Gastrocnemius medialis (tissue), 4 donors: ENCODE measurements at regions of chr5 and their contacts with region 1.

Region 1: DNA sequence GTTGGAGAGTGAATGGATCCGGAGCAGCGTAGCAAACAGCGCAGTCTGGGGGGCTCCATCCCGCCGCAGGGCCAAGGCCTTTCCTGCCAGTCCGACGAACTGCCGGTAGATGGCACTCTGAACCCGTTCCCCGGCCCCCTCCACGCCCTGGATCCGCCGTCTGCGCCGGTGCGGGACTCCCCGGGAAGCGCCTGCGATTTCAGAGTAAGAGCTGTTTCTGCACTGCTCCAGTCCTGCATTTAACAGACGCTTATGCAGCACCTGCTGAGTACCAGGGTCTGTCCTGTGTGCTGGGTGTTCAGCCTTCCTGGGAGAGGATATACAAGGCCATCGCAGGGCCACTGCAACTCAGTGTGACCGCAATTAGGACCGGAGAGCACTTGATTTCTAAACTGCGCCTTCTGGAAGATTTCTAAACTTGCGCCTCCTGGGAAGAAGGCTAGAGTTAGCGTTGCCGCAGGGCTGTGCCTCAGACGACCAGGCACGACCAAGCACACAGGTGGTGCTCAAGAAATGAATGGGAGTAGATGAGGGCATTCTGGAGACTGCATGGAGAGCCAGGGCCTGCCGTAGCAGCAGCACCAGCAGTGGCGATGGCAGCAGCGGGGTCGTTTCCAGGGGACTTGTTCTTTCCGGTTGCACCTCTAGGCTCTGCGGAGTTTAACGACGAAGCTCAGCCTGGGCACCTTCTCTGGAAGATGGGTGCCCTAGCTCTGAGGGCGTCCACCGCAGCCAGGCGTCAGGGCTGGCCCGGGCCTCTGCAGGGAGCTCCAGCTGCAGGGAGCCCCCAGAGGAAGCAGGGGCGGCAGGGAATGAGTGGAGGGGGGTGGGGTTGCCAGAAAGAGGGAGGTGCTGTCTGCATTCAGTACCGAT is 14.3 kb upstream of the TIFAB start:
- DNase-seq: peak; percentile 52 to 59
- ATAC-seq: peak; percentile 87
- H3K4me3 ChIP-seq: peak overlapping the region; percentile 29 to 46 (median 32)
- H3K27ac ChIP-seq: no peak overlapping the region
- H3K4me1 ChIP-seq: peaks cover 0 to 4% of the 10 kb centered on the region in 2 donors
- H3K27me3 ChIP-seq: peaks cover 0 to 18% (median 0%) of the 10 kb centered on the region in 3 donors
- CTCF ChIP-seq: peak; percentile 61 to 94 (median 82)
- POLR2A ChIP-seq: no peak

Region 2: DNA sequence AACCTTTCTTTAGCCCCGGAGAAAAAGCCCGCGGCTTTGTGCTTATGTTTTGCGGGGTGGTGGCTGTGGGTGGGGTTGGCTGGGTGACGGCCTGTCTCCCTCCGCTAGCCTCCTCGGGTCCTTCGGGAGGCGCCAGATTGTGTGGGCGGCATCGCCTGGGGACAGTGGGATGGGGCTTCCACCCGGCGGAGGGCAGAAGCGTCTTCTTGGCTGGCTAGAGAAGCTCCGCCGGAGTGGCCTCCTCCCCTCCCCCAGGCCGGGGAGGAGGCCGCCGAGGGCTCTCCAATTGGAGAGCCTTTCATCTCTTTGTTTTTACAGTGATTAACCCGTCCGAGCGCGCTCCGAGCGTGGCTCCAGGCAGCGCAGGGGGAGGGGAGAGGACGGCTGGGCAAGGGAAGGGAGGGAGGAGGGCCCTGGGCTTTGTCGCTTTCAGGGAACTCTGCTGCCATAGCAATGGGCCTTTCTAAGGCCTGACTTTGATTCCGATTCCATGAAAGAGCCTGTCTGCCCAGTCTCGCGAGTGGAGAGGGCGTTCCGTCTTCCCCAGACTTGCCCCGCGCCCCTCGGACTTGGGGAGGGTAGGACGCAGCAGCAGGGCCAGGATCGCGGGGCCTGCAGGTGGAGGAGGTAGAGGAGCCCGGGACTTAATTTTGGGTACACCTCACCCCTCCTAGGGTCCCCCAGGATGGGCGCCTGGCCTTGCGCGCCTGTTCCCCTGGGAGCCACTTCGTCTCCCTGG is 22.5 kb after region 1 on chr5:
- in situ Hi-C with region 1: no loop called
- intact Hi-C with region 1: no loop called
- DNase-seq: no peak
- ATAC-seq: no peak
- H3K4me3 ChIP-seq: peak overlapping the region; percentile 39 to 58 (median 47)
- H3K27ac ChIP-seq: no peak overlapping the region
- H3K4me1 ChIP-seq: peaks cover 16 to 20% of the 10 kb centered on the region in 2 donors
- H3K27me3 ChIP-seq: peaks cover 54 to 59% (median 56%) of the 10 kb centered on the region in 3 donors
- CTCF ChIP-seq: no peak
- POLR2A ChIP-seq: no peak

Region 3: DNA sequence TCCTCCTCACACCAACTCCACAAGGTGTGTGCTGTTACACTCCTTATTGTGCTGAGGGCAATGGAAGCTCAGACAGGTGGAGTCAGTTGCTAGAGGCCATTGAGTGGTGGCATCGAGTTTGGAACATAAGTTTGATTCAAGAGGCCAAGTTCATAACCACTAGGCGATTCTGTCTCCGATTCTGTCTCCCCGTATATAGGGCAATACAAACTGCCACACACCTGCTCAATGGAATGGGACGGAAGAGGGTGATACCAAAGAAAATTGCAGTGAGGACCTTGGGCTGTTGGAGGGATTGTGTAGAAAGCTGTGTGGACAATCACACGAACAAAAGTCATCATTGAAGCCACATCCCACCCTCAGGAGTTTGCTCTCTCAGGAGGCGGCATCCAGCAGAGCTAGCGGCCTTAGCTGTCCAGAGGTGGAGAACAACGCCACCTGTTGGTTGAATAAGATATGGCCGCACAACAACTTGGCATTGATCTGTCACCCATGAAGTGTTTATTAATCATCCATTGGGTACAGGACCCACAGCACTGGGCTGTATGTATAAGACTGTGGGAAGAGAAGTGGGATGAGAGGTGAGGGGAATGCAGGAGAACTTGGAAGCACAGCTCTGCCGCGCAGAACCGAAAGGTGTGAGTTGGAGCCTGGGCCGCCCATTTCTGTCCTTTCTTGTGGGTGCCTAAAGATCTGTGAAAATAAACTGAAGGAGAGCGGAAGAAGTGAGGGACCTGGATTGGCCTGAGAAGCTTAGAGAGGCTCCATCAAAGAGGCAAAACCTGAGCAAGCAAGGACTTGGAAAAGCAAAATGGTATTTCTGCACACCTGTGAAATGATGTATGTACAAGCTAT is 85.4 kb after region 1 on chr5:
- in situ Hi-C with region 1: loop called (anchors 5 kb)
- intact Hi-C with region 1: loop called (anchors 1 kb)
- DNase-seq: peak; percentile 26 to 42
- ATAC-seq: peak; percentile 68 to 83
- H3K4me3 ChIP-seq: no peak overlapping the region
- H3K27ac ChIP-seq: no peak overlapping the region
- H3K4me1 ChIP-seq: no peaks in the 10 kb centered on the region
- H3K27me3 ChIP-seq: peaks cover 4 to 23% (median 6%) of the 10 kb centered on the region in 3 donors
- CTCF ChIP-seq: peak; percentile 49 to 86 (median 83)
- POLR2A ChIP-seq: no peak

Region 4: DNA sequence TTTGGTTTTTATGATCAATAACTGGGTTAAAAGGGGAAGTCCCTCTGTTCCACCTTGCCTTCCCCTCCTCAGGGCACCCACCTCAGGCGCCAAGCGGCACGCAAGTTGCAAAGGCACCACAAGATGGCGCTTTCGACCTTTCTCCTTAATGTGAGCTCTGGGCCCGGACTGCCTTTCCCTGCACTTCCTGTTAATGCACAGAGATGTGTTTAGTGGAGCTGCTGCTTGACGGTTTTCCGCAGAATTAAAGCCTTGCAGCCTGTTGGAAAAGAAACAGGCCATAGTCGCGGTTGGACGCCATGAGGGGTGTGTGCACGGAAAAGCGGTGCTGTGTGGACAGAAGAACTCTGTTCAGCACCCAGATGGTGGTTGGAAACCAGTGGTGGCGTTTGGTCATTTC is 94.4 kb after region 1 on chr5:
- in situ Hi-C with region 1: loop called in 1 of 4 experiments (anchors 5 kb)
- intact Hi-C with region 1: loop called (anchors 5 kb)
- DNase-seq: peak; percentile 38 to 46
- ATAC-seq: peak; percentile 66 to 80
- H3K4me3 ChIP-seq: no peak overlapping the region
- H3K27ac ChIP-seq: no peak overlapping the region
- H3K4me1 ChIP-seq: no peaks in the 10 kb centered on the region
- H3K27me3 ChIP-seq: peaks cover 0 to 15% (median 0%) of the 10 kb centered on the region in 3 donors
- CTCF ChIP-seq: peak; percentile 10 to 75 (median 60)
- POLR2A ChIP-seq: no peak

Region 5: GRCh38 chr5:135565725-135566421 is 99.5 kb after region 1 on chr5:
- in situ Hi-C with region 1: no loop called
- intact Hi-C with region 1: loop called (anchors 5 kb)
- DNase-seq: peak; percentile 27 to 53
- ATAC-seq: peak; percentile 69 to 87
- H3K4me3 ChIP-seq: no peak overlapping the region
- H3K27ac ChIP-seq: no peak overlapping the region
- H3K4me1 ChIP-seq: no peaks in the 10 kb centered on the region
- H3K27me3 ChIP-seq: no peaks in the 10 kb centered on the region
- CTCF ChIP-seq: peak; percentile 42 to 90 (median 70)
- POLR2A ChIP-seq: no peak

Region 6: DNA sequence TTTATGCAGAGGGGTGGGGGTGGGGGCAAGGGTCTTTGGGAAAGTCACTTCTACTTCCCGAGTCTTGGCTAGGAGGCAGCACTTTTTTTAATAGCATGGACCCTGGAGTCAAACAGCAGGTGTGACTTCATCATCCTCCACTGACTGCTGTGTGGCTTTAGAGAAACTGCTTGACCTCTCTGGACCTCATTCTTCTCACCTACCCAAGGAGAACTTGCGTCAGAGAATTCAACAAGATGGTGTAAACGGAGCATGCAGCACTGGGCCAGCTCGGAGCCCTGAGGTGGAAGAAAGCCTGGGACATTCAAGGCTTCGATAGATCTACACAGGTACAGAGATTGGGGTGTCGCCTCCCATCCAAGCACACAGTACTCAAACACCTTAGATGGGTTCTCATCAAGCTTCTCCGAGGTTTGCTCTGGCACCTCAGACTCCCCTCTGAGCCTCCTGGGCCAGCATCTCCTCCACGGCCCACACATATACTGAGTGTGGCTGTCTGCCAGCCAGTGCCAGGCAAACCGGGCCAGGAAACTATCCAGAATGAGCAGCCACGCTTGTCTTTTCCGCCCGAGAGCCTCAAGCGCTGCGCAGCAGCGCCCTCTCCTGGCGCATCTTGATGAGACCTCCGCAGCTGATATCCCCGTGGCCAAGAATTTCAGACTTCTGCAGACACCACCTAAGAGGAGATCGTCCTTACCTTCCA is 363.4 kb after region 1 on chr5:
- in situ Hi-C with region 1: loop called in 3 of 4 experiments (anchors 25 kb)
- intact Hi-C with region 1: loop called (anchors 10 kb)
- DNase-seq: peak in 1 of 2 donors; percentile 39
- ATAC-seq: peak; percentile 18 to 56
- H3K4me3 ChIP-seq: no peak overlapping the region
- H3K27ac ChIP-seq: no peak overlapping the region
- H3K4me1 ChIP-seq: peaks cover 0 to under 1% of the 10 kb centered on the region in 2 donors
- H3K27me3 ChIP-seq: peaks cover 0 to 11% (median 4%) of the 10 kb centered on the region in 3 donors
- CTCF ChIP-seq: peak; percentile 39 to 73 (median 64)
- POLR2A ChIP-seq: no peak